HCT116 (cell line): ENCODE measurements at regions of chr1 and their contacts with region 1.

Region 1: DNA sequence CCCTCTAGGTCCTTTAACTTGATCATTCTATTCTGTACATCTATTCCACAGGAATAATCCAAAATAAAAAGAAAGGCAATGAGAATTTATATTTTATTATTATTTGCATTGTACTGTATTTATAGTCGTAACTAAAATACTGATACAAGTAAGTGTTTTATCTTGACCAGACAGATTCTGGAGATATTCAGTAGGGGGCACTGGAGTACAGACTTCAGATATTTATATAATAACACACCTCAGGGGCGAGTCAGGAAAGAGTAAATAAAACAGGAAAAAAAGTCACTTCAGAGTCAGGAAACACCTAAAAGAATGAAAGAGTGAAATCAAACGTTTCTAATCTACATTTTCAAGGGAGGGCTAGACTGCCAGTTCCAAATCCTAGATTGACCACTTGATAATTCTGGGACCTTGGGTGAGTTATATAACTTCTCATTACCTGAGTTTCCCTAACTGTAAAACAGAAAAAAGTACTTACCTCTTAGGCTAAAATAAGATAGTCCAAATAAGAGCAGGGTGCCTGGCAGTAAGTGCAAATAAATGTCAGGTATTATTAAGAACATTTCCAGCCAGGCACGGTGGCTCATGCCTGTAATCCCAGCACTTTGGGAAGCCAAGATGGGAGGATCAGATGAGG is 31.1 kb upstream of the MTF1 start:
- DNase-seq: peak; percentile 23
- ATAC-seq: peak; percentile 74
- H3K4me3 ChIP-seq: no peak overlapping the region
- H3K27ac ChIP-seq: no peak overlapping the region
- H3K4me1 ChIP-seq: no peaks in the 10 kb centered on the region
- H3K27me3 ChIP-seq: no peaks in the 10 kb centered on the region
- CTCF ChIP-seq: peak; percentile 50 to 74 (median 60); a peak in 5 of 6 replicates
- POLR2A ChIP-seq: no peak
- RAD21 ChIP-seq: peak; percentile 75

Region 2: GRCh38 chr1:37905727-37906126 is 15.2 kb after region 1 on chr1:
- CTCF ChIA-PET with region 1: no interaction called
- POLR2A ChIA-PET with region 1: no interaction called
- RAD21 ChIA-PET with region 1: no interaction called
- intact Hi-C with region 1: no loop called
- DNase-seq: no peak
- ATAC-seq: no peak
- H3K4me3 ChIP-seq: no peak overlapping the region
- H3K27ac ChIP-seq: no peak overlapping the region
- H3K4me1 ChIP-seq: peaks cover 0 to 6% of the 10 kb centered on the region in 2 experiments; a peak in 1 of 4 replicates
- H3K27me3 ChIP-seq: no peaks in the 10 kb centered on the region
- CTCF ChIP-seq: no peak
- POLR2A ChIP-seq: no peak
- RAD21 ChIP-seq: no peak

Region 3: GRCh38 chr1:38018864-38019343 is 128.4 kb after region 1 on chr1:
- CTCF ChIA-PET with region 1: interaction called, 3 read pairs
- POLR2A ChIA-PET with region 1: no interaction called
- RAD21 ChIA-PET with region 1: no interaction called
- intact Hi-C with region 1: loop called (anchors 1 kb)
- DNase-seq: no peak
- ATAC-seq: peak; percentile 71
- H3K4me3 ChIP-seq: no peak overlapping the region
- H3K27ac ChIP-seq: no peak overlapping the region
- H3K4me1 ChIP-seq: peaks cover 5 to 7% of the 10 kb centered on the region in 2 experiments; a peak in 3 of 4 replicates
- H3K27me3 ChIP-seq: no peaks in the 10 kb centered on the region
- CTCF ChIP-seq: peak; percentile 58 to 78 (median 65)
- POLR2A ChIP-seq: no peak
- RAD21 ChIP-seq: peak; percentile 76